Activated T-helper 2 cell treated with anti-CD3 and anti-CD28 coated beads, Interferon-gamma antibody, Interleukin-2, Interleukin-4, amounts not matched to agents 10 μg/mL and 5 μg/mL and 100 μg/mL, durations not matched to agents 14 hours and 24 hours and 36 hours (primary cell): ENCODE measurements at regions of chr9 and their contacts with region 1.

Region 1: DNA sequence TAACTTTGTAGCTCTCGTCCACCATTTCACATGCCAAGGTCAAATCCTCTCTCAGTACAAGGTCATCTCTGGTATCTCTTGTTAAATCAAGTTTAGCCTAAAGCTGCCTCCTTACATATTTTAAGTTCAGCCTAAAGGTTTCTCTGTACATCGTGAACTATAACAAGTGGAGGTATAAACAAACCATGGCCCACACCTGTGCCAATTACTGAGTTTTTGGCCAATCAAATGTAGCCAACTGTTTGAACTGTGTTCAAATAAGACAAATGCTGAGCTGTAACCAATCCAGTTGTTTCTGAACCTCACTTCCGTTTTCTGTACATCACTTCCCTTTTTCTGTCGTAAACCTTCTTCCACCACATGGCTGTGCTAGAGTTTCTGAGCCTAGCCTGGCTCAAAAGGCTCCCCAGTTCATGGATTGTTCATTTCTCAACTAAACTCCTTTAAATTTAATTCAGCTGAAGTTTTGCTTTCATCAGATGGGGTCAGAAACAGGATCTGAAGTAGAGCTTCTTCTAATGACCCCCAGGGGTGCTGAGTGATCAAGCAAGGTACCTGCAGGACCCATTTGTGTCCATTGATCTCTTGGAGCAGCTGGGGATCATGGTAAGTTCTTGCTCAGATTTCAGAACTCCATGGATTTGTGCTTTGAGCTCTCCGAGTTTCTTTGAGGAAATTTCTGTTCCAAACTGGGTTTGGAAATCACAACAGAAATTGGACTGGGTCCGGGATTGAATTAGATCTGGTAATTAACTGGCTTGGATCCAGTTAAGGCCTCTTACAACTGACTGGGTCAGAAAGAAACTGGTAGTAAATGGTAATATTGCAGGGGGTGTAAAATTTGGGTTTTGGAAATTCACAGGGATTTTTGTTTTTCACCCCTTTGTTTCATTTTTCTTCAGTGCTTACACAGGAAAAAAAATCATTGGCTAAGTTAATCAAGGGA is 11.0 kb upstream of the NANS start:
- DNase-seq: peak; percentile 39
- H3K4me3 Mint-ChIP-seq: peak overlapping the region; percentile 84
- H3K27ac Mint-ChIP-seq: peak overlapping the region; percentile 86
- H3K4me1 Mint-ChIP-seq: peaks cover 28% of the 10 kb centered on the region
- H3K27me3 Mint-ChIP-seq: no peaks in the 10 kb centered on the region

Region 2: GRCh38 chr9:97982683-97983588 is 62.6 kb before region 1 on chr9 and contains the start of gene ANP32B:
- intact Hi-C with region 1: loop called (anchors 5 kb)
- DNase-seq: peak; percentile 93
- H3K4me3 Mint-ChIP-seq: peak within 1 kb of the TSS; percentile 84
- H3K27ac Mint-ChIP-seq: peak within 1 kb of the TSS; percentile 80
- H3K4me1 Mint-ChIP-seq: peaks cover 27% of the 10 kb centered on the region
- H3K27me3 Mint-ChIP-seq: no peaks in the 10 kb centered on the region
- total RNA-seq, gene ANP32B: 307 and 323 TPM in 2 replicates